Activated CD4-positive, alpha-beta T cell treated with anti-CD3 and anti-CD28 coated beads for 36 hours (primary cell): ENCODE measurements at regions of chr9 and their contacts with region 1.

Region 1: GRCh38 chr9:137223078-137223970 is 1.3 kb upstream of the RNF208 start:
- DNase-seq: peak; percentile 99
- ATAC-seq: peak; percentile 90
- H3K4me3 Mint-ChIP-seq: peak overlapping the region; percentile 80
- H3K27ac Mint-ChIP-seq: peak overlapping the region; percentile 83
- H3K4me1 Mint-ChIP-seq: peaks cover 8% of the 10 kb centered on the region
- H3K27me3 Mint-ChIP-seq: peaks cover 2% of the 10 kb centered on the region

Region 2: GRCh38 chr9:135516132-135516860 is 1707.0 kb before region 1 on chr9:
- CTCF ChIA-PET with region 1: no interaction called
- POLR2A ChIA-PET with region 1: no interaction called
- intact Hi-C with region 1: no loop called
- DNase-seq: peak; percentile 39
- ATAC-seq: peak; percentile 60
- H3K4me3 Mint-ChIP-seq: no peak overlapping the region
- H3K27ac Mint-ChIP-seq: peak overlapping the region; percentile 19
- H3K4me1 Mint-ChIP-seq: no peaks in the 10 kb centered on the region
- H3K27me3 Mint-ChIP-seq: peaks cover 4% of the 10 kb centered on the region

Region 3: DNA sequence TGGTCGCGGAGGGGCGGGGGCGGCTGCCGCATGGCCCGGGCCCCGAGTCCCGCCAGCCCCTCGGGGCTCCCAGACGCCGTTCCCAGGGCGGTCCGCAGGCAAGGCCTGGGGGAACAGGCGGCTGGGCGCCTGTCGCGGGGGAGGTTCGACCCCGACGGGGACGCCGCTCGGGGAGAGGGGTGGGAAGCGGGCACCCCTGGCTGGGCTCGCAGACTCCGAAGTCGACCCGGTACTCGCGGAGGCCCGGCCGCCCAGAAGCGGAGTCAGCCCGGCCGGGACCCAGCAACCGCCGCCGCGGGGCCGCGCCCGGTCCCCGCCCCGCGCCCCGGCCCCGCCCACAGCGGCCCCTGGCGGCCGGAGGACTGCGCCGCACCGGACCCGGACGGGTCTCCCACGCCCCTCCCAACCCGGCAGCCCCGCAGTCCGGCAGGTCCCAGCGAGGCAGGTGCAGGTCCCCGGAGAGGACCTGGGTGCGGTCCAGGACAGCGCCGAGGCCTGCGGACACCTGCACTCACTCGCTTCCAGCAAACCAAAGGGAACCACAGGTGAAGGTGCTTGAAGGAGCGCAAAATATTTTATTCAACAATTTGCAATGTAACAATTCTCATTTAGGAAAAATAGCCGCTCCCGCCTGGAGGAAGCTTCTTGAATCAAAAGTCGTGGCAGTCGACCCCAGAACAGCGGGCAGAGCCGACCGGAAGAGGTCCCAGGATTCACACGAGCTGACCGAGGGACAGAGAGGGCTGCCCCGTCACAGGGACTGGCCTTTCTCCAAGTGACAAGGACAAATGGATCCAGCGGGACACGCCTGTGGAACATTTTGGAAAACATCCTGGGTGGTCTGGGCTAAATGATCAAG is 783.5 kb before region 1 on chr9 and contains the start of gene INPP5E:
- CTCF ChIA-PET with region 1: no interaction called
- POLR2A ChIA-PET with region 1: no interaction called
- intact Hi-C with region 1: no loop called
- DNase-seq: peak; percentile 89
- ATAC-seq: peak; percentile 85
- H3K4me3 Mint-ChIP-seq: peak within 1 kb of the TSS; percentile 80
- H3K27ac Mint-ChIP-seq: no peak within 1 kb of the TSS
- H3K4me1 Mint-ChIP-seq: peaks cover 21% of the 10 kb centered on the region
- H3K27me3 Mint-ChIP-seq: no peaks in the 10 kb centered on the region
- total RNA-seq, gene INPP5E: 13.5 to 14.1 TPM

Region 4: GRCh38 chr9:137029058-137029936 is 194.0 kb before region 1 on chr9:
- CTCF ChIA-PET with region 1: no interaction called
- POLR2A ChIA-PET with region 1: no interaction called
- intact Hi-C with region 1: loop called in 1 of 2 experiments (anchors 2 kb)
- DNase-seq: peak; percentile 88
- ATAC-seq: peak; percentile 52
- H3K4me3 Mint-ChIP-seq: peak overlapping the region; percentile 60
- H3K27ac Mint-ChIP-seq: peak overlapping the region; percentile 42
- H3K4me1 Mint-ChIP-seq: peaks cover 46% of the 10 kb centered on the region
- H3K27me3 Mint-ChIP-seq: no peaks in the 10 kb centered on the region

Region 5: GRCh38 chr9:137086531-137087408 is 136.6 kb before region 1 on chr9 and contains the start of gene MAN1B1:
- CTCF ChIA-PET with region 1: interaction called, 3 read pairs
- POLR2A ChIA-PET with region 1: no interaction called
- intact Hi-C with region 1: loop called in 1 of 2 experiments (anchors 1 kb)
- DNase-seq: peak; percentile 100
- ATAC-seq: peak; percentile 85
- H3K4me3 Mint-ChIP-seq: peak within 1 kb of the TSS; percentile 88
- H3K27ac Mint-ChIP-seq: peak within 1 kb of the TSS; percentile 96
- H3K4me1 Mint-ChIP-seq: peaks cover 46% of the 10 kb centered on the region
- H3K27me3 Mint-ChIP-seq: no peaks in the 10 kb centered on the region
- total RNA-seq, gene MAN1B1: 21.6 to 26.7 TPM

Region 6: DNA sequence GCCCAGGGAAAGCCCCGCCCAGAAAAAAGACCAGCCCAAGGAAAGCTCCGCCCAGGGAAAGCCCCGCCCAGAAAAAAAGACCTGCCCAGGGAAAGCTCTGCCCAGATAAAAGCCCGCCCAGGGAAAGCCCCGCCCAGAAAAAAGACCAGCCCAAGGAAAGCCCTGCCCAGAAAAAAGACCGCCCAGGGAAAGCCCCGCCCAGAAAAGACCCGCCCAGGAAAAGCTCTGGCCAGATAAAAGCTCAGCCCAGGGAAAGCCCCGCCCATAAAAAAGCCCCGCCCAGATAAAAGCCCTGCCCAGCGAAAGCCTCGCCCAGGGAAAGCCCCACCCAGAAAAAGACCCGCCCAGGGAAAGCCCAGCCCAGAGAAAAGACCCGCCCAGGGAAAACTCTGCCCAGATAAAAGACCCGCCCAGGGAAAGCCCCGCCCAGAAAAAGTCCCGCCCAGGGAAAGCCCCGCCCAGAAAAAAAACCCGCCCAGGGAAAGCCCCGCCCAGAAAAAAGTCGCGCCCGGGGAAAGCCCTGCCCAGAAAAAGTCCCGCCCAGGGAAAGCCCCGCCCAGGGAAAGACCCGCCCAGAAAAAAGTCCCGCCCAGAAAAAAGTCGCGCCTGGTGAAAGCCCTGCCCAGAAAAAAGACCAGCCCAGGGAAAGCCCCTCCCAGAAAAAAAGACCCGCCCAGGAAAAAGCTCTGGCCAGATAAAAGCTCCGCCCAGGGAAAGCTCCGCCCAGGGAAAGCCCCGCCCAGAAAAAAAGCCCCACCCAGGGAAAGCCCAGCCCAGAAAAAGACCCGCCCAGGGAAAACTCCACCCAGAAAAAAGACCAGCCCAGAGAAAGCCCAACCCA is 72.5 kb before region 1 on chr9:
- CTCF ChIA-PET with region 1: no interaction called
- POLR2A ChIA-PET with region 1: interaction called, 4 read pairs
- intact Hi-C with region 1: loop called in 1 of 2 experiments (anchors 1 kb)
- DNase-seq: peak; percentile 90
- ATAC-seq: peak; percentile 80
- H3K4me3 Mint-ChIP-seq: no peak overlapping the region
- H3K27ac Mint-ChIP-seq: no peak overlapping the region
- H3K4me1 Mint-ChIP-seq: peaks cover 8% of the 10 kb centered on the region
- H3K27me3 Mint-ChIP-seq: peaks cover 8% of the 10 kb centered on the region

Region 7: DNA sequence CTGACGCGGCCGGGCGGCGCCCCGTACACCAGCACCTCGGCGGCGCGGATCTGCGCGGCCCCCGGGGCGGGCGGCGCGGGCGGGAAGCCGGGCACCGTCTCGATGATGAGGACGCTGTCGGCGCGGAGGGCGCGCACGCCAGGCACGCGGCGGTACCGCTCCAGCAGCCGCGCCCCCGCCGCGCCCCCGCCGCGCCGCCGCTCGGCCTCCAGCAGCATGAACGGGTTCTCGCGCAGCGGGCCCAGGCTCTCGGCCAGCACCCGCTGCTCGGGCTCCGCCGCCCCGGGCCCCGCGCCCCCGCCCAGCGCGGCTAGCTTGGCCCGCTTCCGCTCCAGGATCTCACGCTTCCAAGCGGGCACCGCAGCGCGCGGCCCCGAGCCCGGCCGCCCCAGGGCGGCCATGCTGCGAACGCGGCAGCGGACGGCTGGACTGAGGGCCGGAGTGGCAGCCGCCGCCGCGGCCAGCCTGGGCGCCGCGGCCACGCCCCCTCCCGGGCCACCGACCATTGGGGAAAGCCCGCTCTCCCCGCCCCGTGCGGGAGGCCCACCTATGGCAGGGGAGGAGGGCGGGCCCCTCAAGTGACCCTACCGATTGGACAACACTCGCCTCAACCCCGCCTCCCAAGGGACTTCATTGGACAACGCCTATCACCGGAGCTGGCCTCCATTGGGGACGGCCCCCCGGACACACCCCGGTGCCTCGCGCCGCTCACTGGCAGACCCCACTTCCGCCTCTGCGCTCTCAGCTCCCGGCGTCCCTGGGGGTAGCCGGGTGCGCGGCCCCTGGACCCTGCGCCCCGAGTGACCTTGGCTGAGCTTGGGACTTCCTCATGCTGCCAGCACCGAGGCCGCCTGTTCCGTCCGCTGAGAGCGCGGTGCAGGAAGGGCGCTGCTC is 22.8 kb before region 1 on chr9 and contains the start of gene TPRN:
- CTCF ChIA-PET with region 1: interaction called, 11 read pairs
- POLR2A ChIA-PET with region 1: no interaction called
- intact Hi-C with region 1: loop called (anchors 1 kb)
- DNase-seq: peak; percentile 99
- ATAC-seq: peak; percentile 99
- H3K4me3 Mint-ChIP-seq: peak within 1 kb of the TSS; percentile 79
- H3K27ac Mint-ChIP-seq: peak within 1 kb of the TSS; percentile 76
- H3K4me1 Mint-ChIP-seq: peaks cover 29% of the 10 kb centered on the region
- H3K27me3 Mint-ChIP-seq: no peaks in the 10 kb centered on the region
- total RNA-seq, gene TPRN: 5.6 to 5.8 TPM

Region 8: GRCh38 chr9:137423004-137423874 is 199.9 kb after region 1 on chr9 and contains the starts of genes EXD3 and NOXA1:
- CTCF ChIA-PET with region 1: no interaction called
- POLR2A ChIA-PET with region 1: no interaction called
- intact Hi-C with region 1: loop called in 1 of 2 experiments (anchors 1 kb)
- DNase-seq: peak; percentile 98
- ATAC-seq: peak; percentile 95
- H3K4me3 Mint-ChIP-seq: peak within 1 kb of the TSS; percentile 82
- H3K27ac Mint-ChIP-seq: peak within 1 kb of the TSS; percentile 66
- H3K4me1 Mint-ChIP-seq: peaks cover 12% of the 10 kb centered on the region
- H3K27me3 Mint-ChIP-seq: no peaks in the 10 kb centered on the region
- total RNA-seq, gene EXD3: 6.7 to 7.1 TPM
- total RNA-seq, gene NOXA1: 0.97 to 1.7 TPM